Naive thymus-derived CD8-positive, alpha-beta T cell (primary cell): ENCODE measurements at regions of chr11 and their contacts with region 1.

Region 1: DNA sequence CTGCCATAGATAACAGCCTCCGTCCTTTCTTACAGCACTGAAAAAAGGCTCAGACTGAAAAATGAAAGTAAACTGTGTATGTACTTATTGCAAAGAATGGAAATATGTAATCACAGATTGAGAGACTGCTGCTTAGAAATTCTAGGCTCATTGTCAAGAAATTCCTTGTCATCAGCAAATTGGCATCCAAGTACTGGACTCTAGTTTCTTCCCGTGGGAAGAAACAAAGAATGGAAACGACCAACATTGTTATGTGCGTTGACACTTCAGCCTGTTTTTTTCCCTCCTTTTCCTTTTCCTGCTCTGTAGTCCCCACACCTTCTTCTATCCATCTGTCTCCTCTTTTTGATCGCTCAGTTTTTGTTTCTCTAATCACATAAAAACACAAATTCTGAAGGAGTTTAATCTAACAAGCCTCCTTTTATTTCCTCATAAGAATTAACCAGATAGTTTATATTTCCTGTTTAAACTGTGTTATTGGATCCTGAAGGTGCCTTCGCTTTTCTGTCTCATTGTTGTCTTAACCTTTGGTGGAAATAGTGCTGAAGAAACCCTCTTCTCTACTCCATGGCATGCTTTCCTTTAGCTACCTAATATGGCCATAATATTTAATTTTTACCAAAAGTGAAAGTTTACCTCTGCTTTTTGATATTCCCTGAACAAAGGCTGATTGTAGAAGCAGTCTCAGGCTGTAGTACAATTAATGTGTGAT is 20.0 kb upstream of the CASP12 start:
- DNase-seq: peak in 2 of 10 donors; percentile 35 to 43
- ATAC-seq: peak; percentile 78 to 83
- H3K4me3 Mint-ChIP-seq: peak overlapping the region; percentile 82 to 98 (median 94)
- H3K27ac Mint-ChIP-seq: peak overlapping the region; percentile 85 to 97 (median 93)
- H3K4me1 Mint-ChIP-seq: peaks cover 32 to 71% (median 56%) of the 10 kb centered on the region in 4 donors
- H3K27me3 Mint-ChIP-seq: no peaks in the 10 kb centered on the region

Region 2: GRCh38 chr11:104934594-104934993 is 16.3 kb after region 1 on chr11:
- POLR2A ChIA-PET with region 1: interaction called, 10 read pairs
- DNase-seq: peak in 3 of 10 donors; percentile 37 to 46 (median 43)
- ATAC-seq: peak; percentile 68 to 94
- H3K4me3 Mint-ChIP-seq: peak overlapping the region; percentile 31 to 79 (median 74)
- H3K27ac Mint-ChIP-seq: peak overlapping the region in 6 of 10 donors; percentile 7 to 61 (median 48)
- H3K4me1 Mint-ChIP-seq: peaks cover 17 to 58% (median 24%) of the 10 kb centered on the region in 4 donors
- H3K27me3 Mint-ChIP-seq: no peaks in the 10 kb centered on the region

Region 3: DNA sequence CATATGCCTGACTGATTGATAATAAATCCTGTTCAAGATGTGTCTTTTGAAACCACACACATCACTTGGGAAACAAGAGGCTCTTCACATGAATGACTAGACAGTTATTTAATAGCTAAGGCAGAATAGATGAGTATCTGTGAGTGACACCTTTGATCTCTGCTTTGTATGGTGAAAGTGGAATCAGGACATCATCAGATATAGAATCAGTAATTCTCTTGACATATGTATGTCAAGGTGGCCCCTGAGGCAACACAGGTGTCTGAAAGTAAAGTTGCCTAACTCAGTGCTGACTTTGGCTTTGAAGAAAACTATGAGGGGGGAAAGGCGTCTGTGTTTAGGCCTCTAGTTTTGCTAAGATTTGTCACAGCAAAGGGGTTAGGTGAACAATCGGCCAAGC is 61.6 kb after region 1 on chr11:
- POLR2A ChIA-PET with region 1: no interaction called
- DNase-seq: no peak
- ATAC-seq: no peak
- H3K4me3 Mint-ChIP-seq: no peak overlapping the region
- H3K27ac Mint-ChIP-seq: no peak overlapping the region
- H3K4me1 Mint-ChIP-seq: no peaks in the 10 kb centered on the region
- H3K27me3 Mint-ChIP-seq: no peaks in the 10 kb centered on the region